Activated CD4-positive, alpha-beta memory T cell treated with anti-CD3 and anti-CD28 coated beads for 36 hours (primary cell): ENCODE measurements at regions of chr1 and their contacts with region 1.

Region 1: GRCh38 chr1:88877382-88877825 is 14.0 kb downstream of the GTF2B start:
- DNase-seq: no peak
- H3K4me3 Mint-ChIP-seq: no peak overlapping the region
- H3K27ac Mint-ChIP-seq: peak overlapping the region; percentile 18
- H3K4me1 Mint-ChIP-seq: peaks cover 42% of the 10 kb centered on the region
- H3K27me3 Mint-ChIP-seq: no peaks in the 10 kb centered on the region

Region 2: GRCh38 chr1:88655685-88656299 is 221.6 kb before region 1 on chr1:
- CTCF ChIA-PET with region 1: interaction called, 27 read pairs
- POLR2A ChIA-PET with region 1: no interaction called
- intact Hi-C with region 1: loop called (anchors 2 kb)
- DNase-seq: no peak
- H3K4me3 Mint-ChIP-seq: no peak overlapping the region
- H3K27ac Mint-ChIP-seq: no peak overlapping the region
- H3K4me1 Mint-ChIP-seq: peaks cover 14% of the 10 kb centered on the region
- H3K27me3 Mint-ChIP-seq: no peaks in the 10 kb centered on the region

Region 3: DNA sequence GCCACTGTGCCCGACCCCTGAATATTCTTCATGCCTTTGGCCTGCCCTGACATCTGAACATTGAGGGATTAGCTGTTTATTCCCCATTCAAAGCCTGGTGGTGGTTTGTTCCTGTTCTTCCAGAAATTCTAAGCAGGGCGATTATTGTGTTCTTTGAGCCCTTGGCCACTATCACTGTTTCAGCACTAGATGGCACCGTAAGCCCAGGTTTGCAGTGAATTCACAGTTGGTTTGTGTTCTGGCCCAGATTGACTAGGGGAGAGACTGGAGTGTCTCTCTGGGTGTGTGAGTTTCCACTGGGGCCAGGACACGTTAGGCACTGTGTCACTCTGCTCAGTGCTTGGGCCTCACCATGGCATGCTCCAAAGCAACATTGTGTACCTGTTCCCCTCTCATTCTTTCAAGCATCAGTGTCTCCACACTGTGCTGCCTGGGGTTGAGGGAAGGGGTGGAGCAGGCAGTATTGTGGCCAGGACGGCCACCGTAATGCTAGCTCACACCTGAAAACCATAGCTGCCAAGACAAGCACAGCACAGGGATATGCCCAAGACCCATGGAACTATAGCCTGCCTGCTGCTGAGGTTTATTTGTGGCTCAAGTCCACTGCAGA is 140.7 kb before region 1 on chr1:
- CTCF ChIA-PET with region 1: interaction called, 23 read pairs
- POLR2A ChIA-PET with region 1: no interaction called
- intact Hi-C with region 1: loop called (anchors 1 kb)
- DNase-seq: peak; percentile 40
- H3K4me3 Mint-ChIP-seq: no peak overlapping the region
- H3K27ac Mint-ChIP-seq: no peak overlapping the region
- H3K4me1 Mint-ChIP-seq: peaks cover 10% of the 10 kb centered on the region
- H3K27me3 Mint-ChIP-seq: no peaks in the 10 kb centered on the region

Region 4: GRCh38 chr1:88800382-88801051 is 76.9 kb before region 1 on chr1:
- CTCF ChIA-PET with region 1: interaction called, 11 read pairs
- POLR2A ChIA-PET with region 1: no interaction called
- intact Hi-C with region 1: loop called (anchors 1 kb)
- DNase-seq: peak; percentile 38
- H3K4me3 Mint-ChIP-seq: no peak overlapping the region
- H3K27ac Mint-ChIP-seq: no peak overlapping the region
- H3K4me1 Mint-ChIP-seq: peaks cover 13% of the 10 kb centered on the region
- H3K27me3 Mint-ChIP-seq: no peaks in the 10 kb centered on the region

Region 5: DNA sequence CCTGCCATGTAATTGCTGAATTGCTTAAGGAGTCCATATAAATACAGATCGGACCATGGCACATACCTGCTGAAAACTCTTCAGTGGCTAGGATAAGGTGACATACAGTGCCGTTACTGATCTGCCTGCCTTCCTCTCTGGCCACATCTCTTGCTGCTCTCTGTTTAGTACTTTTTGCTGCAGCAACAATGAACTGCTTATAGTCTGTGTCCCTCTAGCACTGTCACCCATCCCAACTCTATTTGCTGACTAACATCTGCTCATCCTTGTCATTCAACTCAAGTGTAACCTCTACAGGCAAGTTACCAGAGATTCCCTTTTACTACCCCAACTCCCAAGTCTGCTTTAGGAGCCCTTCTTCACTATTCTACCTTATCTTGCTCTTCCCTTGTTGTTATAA is 51.7 kb before region 1 on chr1:
- CTCF ChIA-PET with region 1: interaction called, 12 read pairs
- POLR2A ChIA-PET with region 1: no interaction called
- intact Hi-C with region 1: no loop called
- DNase-seq: no peak
- H3K4me3 Mint-ChIP-seq: no peak overlapping the region
- H3K27ac Mint-ChIP-seq: no peak overlapping the region
- H3K4me1 Mint-ChIP-seq: no peaks in the 10 kb centered on the region
- H3K27me3 Mint-ChIP-seq: no peaks in the 10 kb centered on the region

Region 6: DNA sequence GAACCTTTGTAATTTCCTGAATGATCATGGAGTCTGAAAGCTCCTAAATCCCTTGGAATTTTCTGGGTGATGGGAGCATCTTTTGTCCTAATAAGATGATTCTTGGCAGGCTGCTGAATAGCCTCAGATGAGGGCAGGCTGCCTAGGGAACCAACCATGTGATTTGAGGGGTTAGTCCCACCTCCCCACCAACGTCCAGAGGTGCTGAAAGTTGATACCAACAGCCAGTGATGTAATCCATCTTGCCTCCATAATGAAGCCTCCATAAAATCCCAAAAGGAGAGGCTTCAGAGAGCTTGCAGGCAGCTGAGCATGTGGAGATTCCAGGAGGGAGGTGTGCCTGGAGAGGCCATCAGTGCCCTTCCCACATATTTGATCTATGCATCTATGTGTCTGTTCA is 29.8 kb before region 1 on chr1:
- CTCF ChIA-PET with region 1: interaction called, 14 read pairs
- POLR2A ChIA-PET with region 1: no interaction called
- intact Hi-C with region 1: no loop called
- DNase-seq: no peak
- H3K4me3 Mint-ChIP-seq: no peak overlapping the region
- H3K27ac Mint-ChIP-seq: no peak overlapping the region
- H3K4me1 Mint-ChIP-seq: no peaks in the 10 kb centered on the region
- H3K27me3 Mint-ChIP-seq: no peaks in the 10 kb centered on the region

Region 7: GRCh38 chr1:88891318-88891950 is 14.0 kb after region 1 on chr1 and contains the start of gene GTF2B:
- CTCF ChIA-PET with region 1: interaction called, 54 read pairs
- POLR2A ChIA-PET with region 1: no interaction called
- intact Hi-C with region 1: no loop called
- DNase-seq: peak; percentile 97
- H3K4me3 Mint-ChIP-seq: peak within 1 kb of the TSS; percentile 81
- H3K27ac Mint-ChIP-seq: peak within 1 kb of the TSS; percentile 84
- H3K4me1 Mint-ChIP-seq: peaks cover 41% of the 10 kb centered on the region
- H3K27me3 Mint-ChIP-seq: peaks cover 2% of the 10 kb centered on the region
- total RNA-seq, gene GTF2B: 34.2 to 39.4 TPM

Region 8: GRCh38 chr1:88983791-88984559 is 106.6 kb after region 1 on chr1:
- CTCF ChIA-PET with region 1: no interaction called
- POLR2A ChIA-PET with region 1: no interaction called
- intact Hi-C with region 1: no loop called
- DNase-seq: peak; percentile 41
- H3K4me3 Mint-ChIP-seq: peak overlapping the region; percentile 17
- H3K27ac Mint-ChIP-seq: peak overlapping the region; percentile 80
- H3K4me1 Mint-ChIP-seq: peaks cover 87% of the 10 kb centered on the region
- H3K27me3 Mint-ChIP-seq: no peaks in the 10 kb centered on the region

Region 9: DNA sequence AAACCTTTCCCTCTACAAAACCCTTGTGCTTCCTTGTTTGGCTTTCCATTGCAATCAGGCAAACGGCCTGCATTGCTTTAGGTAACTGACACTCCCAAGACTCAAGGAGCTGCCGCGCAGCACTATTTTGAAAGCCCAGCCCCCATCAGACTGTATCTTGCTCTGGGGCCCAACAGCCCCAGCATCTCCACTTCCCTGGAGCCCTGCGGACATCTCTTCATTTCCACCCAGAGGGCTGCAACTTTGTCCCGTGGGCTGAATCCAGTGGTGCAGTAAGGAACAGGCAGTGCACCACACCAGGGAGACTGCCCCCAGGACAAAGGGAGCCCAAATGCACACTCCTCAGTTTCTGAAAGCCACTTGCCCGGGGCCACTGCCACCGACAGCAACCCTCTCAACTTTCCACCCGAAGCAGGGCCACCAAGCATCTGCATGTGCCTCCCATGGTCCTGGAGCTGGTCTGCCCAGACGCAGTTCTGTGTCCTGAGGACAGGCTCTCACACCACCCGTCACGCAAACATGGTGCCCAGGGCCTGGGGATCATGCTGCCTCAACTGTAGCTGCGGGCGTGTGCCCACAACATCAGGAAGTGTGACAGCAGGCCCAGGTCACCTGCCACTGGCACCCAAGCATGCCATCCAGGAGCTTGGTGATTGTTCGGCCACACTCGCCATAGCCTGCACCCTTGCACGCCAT is 173.1 kb after region 1 on chr1:
- CTCF ChIA-PET with region 1: no interaction called
- POLR2A ChIA-PET with region 1: no interaction called
- intact Hi-C with region 1: no loop called
- DNase-seq: no peak
- H3K4me3 Mint-ChIP-seq: no peak overlapping the region
- H3K27ac Mint-ChIP-seq: no peak overlapping the region
- H3K4me1 Mint-ChIP-seq: peaks cover 7% of the 10 kb centered on the region
- H3K27me3 Mint-ChIP-seq: no peaks in the 10 kb centered on the region